ENCODE measurements at regions of chr18 and their contacts with region 1.

Region 1: DNA sequence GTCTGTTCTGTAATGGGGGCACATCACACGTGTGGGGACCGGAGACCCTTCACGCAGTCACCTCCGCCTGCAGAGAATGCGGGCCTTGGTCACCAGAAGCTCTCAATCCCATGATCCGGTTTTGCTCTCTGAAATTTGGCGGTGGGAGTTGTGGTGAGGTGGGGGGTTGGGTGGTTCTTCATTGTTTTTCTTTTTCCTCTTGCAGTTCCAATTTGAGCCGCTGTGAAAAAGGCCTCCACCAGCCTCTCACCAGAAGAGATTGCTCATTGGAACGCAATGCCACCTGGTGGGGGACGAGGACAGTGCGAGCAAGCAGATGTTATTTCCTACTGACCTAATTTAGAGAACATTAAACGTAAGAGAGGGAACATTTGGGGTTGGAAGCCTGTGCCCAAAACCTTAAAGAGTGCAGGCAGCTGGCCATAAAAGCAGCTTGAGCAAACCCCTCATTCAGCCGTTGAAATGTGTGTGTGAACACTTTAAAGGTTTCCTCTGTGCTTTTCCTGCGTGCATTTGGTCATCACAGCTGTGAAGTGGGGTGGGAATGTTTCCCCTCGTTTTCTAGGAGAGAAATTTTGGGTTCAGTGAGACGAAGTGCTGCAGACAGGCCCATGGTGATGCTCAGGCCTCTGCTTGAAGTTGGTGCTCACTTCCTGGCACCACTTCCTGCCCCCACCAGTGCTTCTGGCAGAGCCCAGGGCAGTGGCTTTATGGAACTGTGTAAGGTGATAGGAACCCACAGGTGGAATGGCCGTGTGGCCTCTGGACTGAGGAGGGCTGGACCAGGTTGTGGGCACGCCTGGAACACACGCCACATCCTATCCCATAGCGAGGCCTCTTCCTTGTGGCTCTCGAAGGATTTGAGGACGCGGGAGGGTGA is 61.7 kb downstream of the ZCCHC2 start:
- DNase-seq: peak; percentile 77 to 86 (median 79)
- ATAC-seq: peak; percentile 92
- H3K4me3 ChIP-seq: no peak overlapping the region
- H3K27ac ChIP-seq: no peak overlapping the region
- H3K4me1 ChIP-seq: peaks cover 2 to 3% of the 10 kb centered on the region in 2 experiments; a peak in 1 of 5 replicates
- H3K27me3 ChIP-seq: no peaks in the 10 kb centered on the region
- CTCF ChIP-seq: peak; percentile 91 to 99 (median 99)
- EP300 ChIP-seq: no peak
- POLR2A ChIP-seq: no peak
- RAD21 ChIP-seq: peak; percentile 83 to 91

Region 2: GRCh38 chr18:60892850-60893249 is 1691.6 kb before region 1 on chr18:
- CTCF ChIA-PET with region 1: no interaction called
- POLR2A ChIA-PET with region 1: no interaction called
- in situ Hi-C with region 1: no loop called
- intact Hi-C with region 1: no loop called
- DNase-seq: no peak
- ATAC-seq: no peak
- H3K4me3 ChIP-seq: no peak overlapping the region
- H3K27ac ChIP-seq: no peak overlapping the region
- H3K4me1 ChIP-seq: no peaks in the 10 kb centered on the region
- H3K27me3 ChIP-seq: no peaks in the 10 kb centered on the region
- CTCF ChIP-seq: no peak
- EP300 ChIP-seq: no peak
- POLR2A ChIP-seq: no peak
- RAD21 ChIP-seq: no peak

Region 3: GRCh38 chr18:62186774-62187542 is 397.5 kb before region 1 on chr18 and contains the starts of genes PIGN and RELCH:
- CTCF ChIA-PET with region 1: interaction called, 23 read pairs
- POLR2A ChIA-PET with region 1: no interaction called
- in situ Hi-C with region 1: no loop called
- intact Hi-C with region 1: loop called (anchors 2 kb)
- DNase-seq: peak; percentile 91 to 95 (median 92)
- ATAC-seq: peak; percentile 88
- H3K4me3 ChIP-seq: peak within 1 kb of the TSS; percentile 100
- H3K27ac ChIP-seq: peak within 1 kb of the TSS; percentile 90
- H3K4me1 ChIP-seq: peaks cover 0 to 7% of the 10 kb centered on the region in 2 experiments; a peak in 2 of 5 replicates
- H3K27me3 ChIP-seq: no peaks in the 10 kb centered on the region
- CTCF ChIP-seq: no peak
- EP300 ChIP-seq: no peak
- POLR2A ChIP-seq: peak; percentile 79
- RAD21 ChIP-seq: no peak
- polyA plus RNA-seq, gene PIGN: 14.6 to 15.2 TPM
- polyA plus RNA-seq, gene RELCH: 1.4 to 2.0 TPM

Region 4: DNA sequence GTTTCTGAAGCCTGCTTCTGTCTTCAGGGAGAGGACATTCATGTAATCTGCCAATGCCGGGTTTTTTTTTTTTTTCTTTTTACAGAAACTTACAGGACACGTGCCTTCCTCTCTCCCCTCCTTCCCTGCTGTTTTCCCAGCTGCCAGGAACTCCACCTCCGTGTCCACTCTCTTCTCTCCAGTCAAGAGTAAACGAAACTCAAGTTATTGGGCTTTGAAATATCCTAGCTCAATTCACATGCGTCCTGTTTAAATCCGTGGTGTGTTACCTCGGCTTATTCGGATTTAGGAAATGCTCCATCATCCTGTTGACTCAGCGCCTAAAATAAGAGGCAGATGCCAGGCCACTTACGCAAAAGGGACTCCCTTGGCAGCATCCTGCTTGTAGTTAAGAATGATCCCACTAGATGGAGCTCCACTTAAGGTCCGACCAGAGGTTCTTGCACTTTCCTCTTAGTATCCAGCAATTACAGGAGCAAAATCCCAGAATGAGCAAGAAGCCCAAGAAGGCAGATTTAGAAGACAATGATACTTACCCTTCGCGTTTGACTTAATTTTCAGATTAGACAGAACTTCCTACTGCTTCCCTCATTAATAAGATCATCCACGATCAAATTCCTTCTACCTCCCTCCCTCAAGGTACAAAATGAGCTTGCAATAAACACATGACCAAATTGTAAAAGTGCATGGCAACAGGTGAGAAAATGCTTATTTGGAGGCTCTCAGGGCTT is 158.9 kb before region 1 on chr18:
- CTCF ChIA-PET with region 1: interaction called, 14 read pairs
- POLR2A ChIA-PET with region 1: interaction called, 4 read pairs
- in situ Hi-C with region 1: loop called (anchors 5 kb)
- intact Hi-C with region 1: loop called (anchors 1 kb)
- DNase-seq: peak; percentile 41 to 82 (median 50)
- ATAC-seq: peak; percentile 83
- H3K4me3 ChIP-seq: no peak overlapping the region
- H3K27ac ChIP-seq: no peak overlapping the region
- H3K4me1 ChIP-seq: peaks cover 2 to 10% of the 10 kb centered on the region in 2 experiments; a peak in 2 of 5 replicates
- H3K27me3 ChIP-seq: no peaks in the 10 kb centered on the region
- CTCF ChIP-seq: peak; percentile 67 to 83 (median 79)
- EP300 ChIP-seq: no peak
- POLR2A ChIP-seq: no peak
- RAD21 ChIP-seq: peak; percentile 62 to 81

Region 5: GRCh38 chr18:62714671-62715435 is 130.4 kb after region 1 on chr18:
- CTCF ChIA-PET with region 1: interaction called, 4 read pairs
- POLR2A ChIA-PET with region 1: no interaction called
- in situ Hi-C with region 1: no loop called
- intact Hi-C with region 1: loop called (anchors 5 kb)
- DNase-seq: peak; percentile 87 to 97 (median 92)
- ATAC-seq: peak; percentile 93
- H3K4me3 ChIP-seq: peak overlapping the region; percentile 57
- H3K27ac ChIP-seq: peak overlapping the region; percentile 91; the same call in 2 of the 3 replicates
- H3K4me1 ChIP-seq: peaks cover 8 to 14% of the 10 kb centered on the region in 2 experiments; a peak in 4 of 5 replicates
- H3K27me3 ChIP-seq: no peaks in the 10 kb centered on the region
- CTCF ChIP-seq: peak; percentile 64 to 69 (median 68)
- EP300 ChIP-seq: no peak
- POLR2A ChIP-seq: no peak; the same call in 1 of the 2 replicates
- RAD21 ChIP-seq: peak; percentile 68 to 76

Region 6: GRCh38 chr18:62982600-62983251 is 398.2 kb after region 1 on chr18:
- CTCF ChIA-PET with region 1: interaction called, 31 read pairs
- POLR2A ChIA-PET with region 1: interaction called, 4 read pairs
- in situ Hi-C with region 1: no loop called
- intact Hi-C with region 1: loop called (anchors 1 kb)
- DNase-seq: peak; percentile 38 to 63 (median 46)
- ATAC-seq: peak; percentile 84
- H3K4me3 ChIP-seq: no peak overlapping the region
- H3K27ac ChIP-seq: no peak overlapping the region
- H3K4me1 ChIP-seq: no peaks in the 10 kb centered on the region; a peak in 3 of 5 replicates
- H3K27me3 ChIP-seq: no peaks in the 10 kb centered on the region
- CTCF ChIP-seq: peak; percentile 56 to 74 (median 73)
- EP300 ChIP-seq: no peak
- POLR2A ChIP-seq: no peak
- RAD21 ChIP-seq: peak; percentile 69 to 85